Activated CD4-positive, alpha-beta memory T cell treated with anti-CD3 and anti-CD28 coated beads for 36 hours (primary cell): ENCODE measurements at regions of chr12 and their contacts with region 1.

Region 1: GRCh38 chr12:52278541-52279421 is 4.3 kb downstream of the KRT86 start:
- DNase-seq: peak; percentile 81
- H3K4me3 Mint-ChIP-seq: no peak overlapping the region
- H3K27ac Mint-ChIP-seq: no peak overlapping the region
- H3K4me1 Mint-ChIP-seq: peaks cover 9% of the 10 kb centered on the region
- H3K27me3 Mint-ChIP-seq: peaks cover 19% of the 10 kb centered on the region

Region 2: DNA sequence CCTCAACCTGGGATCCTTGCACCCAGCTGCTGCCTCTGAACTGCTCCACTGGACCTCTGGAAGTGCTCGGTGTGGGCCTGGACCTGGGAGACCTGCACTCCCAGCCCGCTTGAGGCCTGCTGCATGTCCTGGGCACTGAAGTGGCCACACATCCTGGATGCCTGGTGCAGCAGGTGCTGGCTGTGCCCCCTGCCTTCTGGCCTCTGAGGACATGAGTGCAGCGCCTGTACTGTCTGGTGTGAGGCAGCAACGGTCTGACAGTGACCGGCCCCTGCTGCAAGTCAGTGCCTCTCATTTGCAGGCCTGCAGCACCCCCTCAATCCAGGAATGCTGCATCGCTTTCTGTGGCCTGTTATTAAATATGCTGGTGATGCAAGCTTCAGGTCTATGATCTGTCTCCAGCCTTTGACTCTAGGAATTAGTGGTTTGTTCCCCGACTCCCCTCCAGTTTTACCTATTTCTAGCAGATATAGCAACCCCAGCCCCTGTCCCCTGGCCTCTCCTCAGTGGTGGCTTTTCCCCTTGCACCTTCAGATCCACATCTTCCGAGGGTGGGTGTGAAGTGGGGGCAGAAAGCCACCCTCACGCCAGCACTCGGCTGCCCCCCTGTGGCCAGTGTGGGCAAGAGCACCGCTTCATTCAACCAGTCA is 195.7 kb before region 1 on chr12:
- CTCF ChIA-PET with region 1: no interaction called
- POLR2A ChIA-PET with region 1: no interaction called
- intact Hi-C with region 1: no loop called
- DNase-seq: peak; percentile 74
- H3K4me3 Mint-ChIP-seq: no peak overlapping the region
- H3K27ac Mint-ChIP-seq: no peak overlapping the region
- H3K4me1 Mint-ChIP-seq: peaks cover 4% of the 10 kb centered on the region
- H3K27me3 Mint-ChIP-seq: no peaks in the 10 kb centered on the region

Region 3: DNA sequence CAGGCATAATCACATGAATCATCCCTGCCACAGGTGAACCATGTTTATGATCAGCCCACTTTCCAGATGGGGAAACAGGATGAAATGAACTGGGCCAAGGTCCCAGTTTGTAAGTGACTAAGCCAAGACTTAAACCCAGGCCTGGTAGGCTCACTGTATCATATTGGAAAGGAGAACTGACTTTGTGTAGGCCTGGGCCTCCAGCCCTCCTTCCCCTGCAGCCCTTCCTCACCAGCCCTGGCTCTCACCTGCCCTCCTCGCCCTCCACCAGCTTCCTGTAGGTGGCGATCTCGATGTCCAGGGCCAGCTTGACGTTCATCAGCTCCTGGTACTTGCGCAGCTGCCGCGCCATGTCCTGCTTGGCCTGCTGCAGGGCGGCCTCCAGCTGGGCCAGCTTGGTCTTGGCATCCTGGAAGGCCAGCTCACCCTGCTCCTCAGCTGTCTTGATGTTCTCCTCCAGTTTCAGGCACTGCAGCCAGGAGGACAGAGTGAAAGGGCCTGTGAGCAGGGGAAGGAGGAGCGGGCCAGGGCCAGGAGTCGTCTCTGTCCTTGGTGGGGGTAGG is 106.8 kb before region 1 on chr12:
- CTCF ChIA-PET with region 1: interaction called, 11 read pairs
- POLR2A ChIA-PET with region 1: no interaction called
- intact Hi-C with region 1: no loop called
- DNase-seq: peak; percentile 49
- H3K4me3 Mint-ChIP-seq: no peak overlapping the region
- H3K27ac Mint-ChIP-seq: no peak overlapping the region
- H3K4me1 Mint-ChIP-seq: no peaks in the 10 kb centered on the region
- H3K27me3 Mint-ChIP-seq: no peaks in the 10 kb centered on the region

Region 4: DNA sequence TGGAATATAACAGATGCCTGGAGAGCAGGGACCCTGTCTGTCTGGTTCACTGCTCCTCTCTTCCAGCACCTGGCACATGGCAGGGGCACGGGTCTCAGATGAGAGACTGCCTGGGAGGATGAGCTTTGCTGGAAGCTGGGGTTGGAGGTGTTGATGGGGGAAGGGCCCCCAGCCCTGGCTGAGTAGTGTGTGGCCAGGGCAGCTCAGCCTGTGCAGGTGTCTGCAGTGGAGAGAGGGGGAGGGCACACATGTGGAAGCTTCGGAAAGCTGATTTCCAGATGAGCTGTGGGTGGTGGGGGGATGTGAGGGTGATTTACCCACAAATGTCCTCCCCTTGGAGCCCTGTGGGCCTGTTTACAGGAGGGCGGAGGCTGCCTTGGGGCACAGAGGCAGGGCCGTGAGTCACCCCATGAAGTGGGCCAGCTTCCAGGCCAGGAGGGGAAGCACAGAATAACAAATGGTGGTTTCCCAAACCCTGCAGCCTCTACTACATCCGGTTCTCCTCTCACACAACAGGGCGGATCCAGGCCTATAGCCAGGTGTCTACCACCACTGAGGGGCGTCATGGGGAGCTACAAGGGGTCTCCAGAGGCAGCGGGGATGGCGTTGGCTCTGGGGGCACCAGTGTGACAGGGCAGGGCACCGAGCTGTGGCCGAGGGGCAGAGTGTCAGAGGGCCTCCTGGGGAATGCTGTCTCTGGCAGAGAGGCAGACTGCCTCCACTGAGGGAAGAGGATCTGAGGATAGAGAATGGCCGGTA is 34.7 kb before region 1 on chr12:
- CTCF ChIA-PET with region 1: interaction called, 11 read pairs
- POLR2A ChIA-PET with region 1: no interaction called
- intact Hi-C with region 1: no loop called
- DNase-seq: peak; percentile 89
- H3K4me3 Mint-ChIP-seq: peak overlapping the region; percentile 48
- H3K27ac Mint-ChIP-seq: peak overlapping the region; percentile 79
- H3K4me1 Mint-ChIP-seq: peaks cover 28% of the 10 kb centered on the region
- H3K27me3 Mint-ChIP-seq: no peaks in the 10 kb centered on the region

Region 5: DNA sequence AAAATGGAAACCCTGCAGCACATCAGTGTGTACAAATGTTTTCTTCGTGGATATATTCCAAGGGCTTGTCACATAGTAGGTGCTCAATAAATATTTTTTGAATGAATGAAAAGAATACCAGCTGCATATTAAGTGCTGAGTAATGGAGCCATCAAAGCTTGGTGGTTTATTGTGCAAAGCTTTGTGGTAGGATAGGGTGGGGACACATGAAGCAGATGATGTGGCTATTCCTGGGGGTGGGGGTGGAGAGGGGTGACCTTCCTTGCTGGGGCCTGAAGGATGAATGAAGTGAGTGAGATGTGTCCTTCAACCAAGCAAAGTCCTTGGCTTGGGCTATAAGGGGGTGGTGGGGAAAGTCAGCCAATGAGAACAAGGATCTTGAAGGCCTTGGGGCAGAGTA is 16.9 kb after region 1 on chr12:
- CTCF ChIA-PET with region 1: interaction called, 52 read pairs
- POLR2A ChIA-PET with region 1: no interaction called
- intact Hi-C with region 1: no loop called
- DNase-seq: no peak
- H3K4me3 Mint-ChIP-seq: no peak overlapping the region
- H3K27ac Mint-ChIP-seq: no peak overlapping the region
- H3K4me1 Mint-ChIP-seq: no peaks in the 10 kb centered on the region
- H3K27me3 Mint-ChIP-seq: peaks cover 19% of the 10 kb centered on the region

Region 6: GRCh38 chr12:52327052-52327829 is 48.5 kb after region 1 on chr12:
- CTCF ChIA-PET with region 1: interaction called, 22 read pairs
- POLR2A ChIA-PET with region 1: no interaction called
- intact Hi-C with region 1: no loop called
- DNase-seq: peak; percentile 88
- H3K4me3 Mint-ChIP-seq: no peak overlapping the region
- H3K27ac Mint-ChIP-seq: no peak overlapping the region
- H3K4me1 Mint-ChIP-seq: peaks cover 10% of the 10 kb centered on the region
- H3K27me3 Mint-ChIP-seq: peaks cover 7% of the 10 kb centered on the region